A673 (cell line): ENCODE measurements at regions of chr6 and their contacts with region 1.

Region 1: GRCh38 chr6:11144393-11144851 is 32.9 kb upstream of the ERVFRD-1 start:
- DNase-seq: peak; percentile 72
- H3K4me3 ChIP-seq: no peak overlapping the region
- H3K27ac ChIP-seq: no peak overlapping the region
- H3K4me1 ChIP-seq: peaks cover 6% of the 10 kb centered on the region
- H3K27me3 ChIP-seq: no peaks in the 10 kb centered on the region
- CTCF ChIP-seq: peak; percentile 98

Region 2: DNA sequence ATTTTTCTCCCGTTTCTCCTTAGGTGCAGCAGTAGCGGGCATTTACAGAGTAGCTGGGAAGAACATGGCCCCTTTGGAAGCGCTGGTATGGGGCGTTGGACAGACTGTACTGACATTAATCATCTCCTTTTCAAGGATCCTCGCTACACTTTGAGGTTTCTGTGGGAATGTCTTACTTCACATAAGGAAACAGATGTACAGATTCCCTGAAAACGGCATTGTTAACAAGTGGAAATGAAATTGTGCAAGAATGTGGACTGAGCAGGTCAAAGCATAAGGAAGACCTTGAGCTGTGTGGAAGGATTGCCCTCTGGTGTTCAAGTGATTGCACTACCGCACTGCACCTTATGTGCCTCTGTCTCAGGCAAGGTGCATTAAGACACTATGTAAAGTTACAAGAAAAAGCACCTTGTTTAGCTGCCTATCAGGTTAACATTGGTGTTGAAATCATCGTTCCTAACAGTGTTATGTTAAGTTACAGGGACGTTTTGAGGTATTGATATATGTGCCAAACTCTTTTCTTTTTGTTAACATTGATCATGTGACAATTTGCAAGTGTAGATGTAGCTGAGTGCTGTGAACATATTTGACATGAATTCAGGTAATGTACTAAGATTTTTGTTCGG is 431.1 kb after region 1 on chr6:
- CTCF ChIA-PET with region 1: no interaction called
- POLR2A ChIA-PET with region 1: no interaction called
- intact Hi-C with region 1: loop called (anchors 2 kb)
- DNase-seq: peak; percentile 80
- H3K4me3 ChIP-seq: no peak overlapping the region
- H3K27ac ChIP-seq: no peak overlapping the region
- H3K4me1 ChIP-seq: peaks cover 7% of the 10 kb centered on the region
- H3K27me3 ChIP-seq: no peaks in the 10 kb centered on the region
- CTCF ChIP-seq: peak; percentile 92